H1 (cell line): ENCODE measurements at regions of chr1 and their contacts with region 1.

Region 1: GRCh38 chr1:155911156-155912055 is at the start of gene RIT1:
- DNase-seq: peak; percentile 62 to 89
- H3K4me3 ChIP-seq: peak within 1 kb of the TSS; percentile 68 to 87 (median 74)
- H3K27ac ChIP-seq: peak within 1 kb of the TSS; percentile 59; the same call in 1 of the 2 replicates
- H3K4me1 ChIP-seq: peaks cover 0 to 3% (median 1%) of the 10 kb centered on the region in 4 experiments; a peak in 2 of 7 replicates
- H3K27me3 ChIP-seq: no peaks in the 10 kb centered on the region
- CTCF ChIP-seq: no peak; a peak in 1 of 4 replicates
- EP300 ChIP-seq: no peak
- POLR2A ChIP-seq: peak in 1 of 2 experiments; percentile 79; a peak in 2 of 3 replicates
- RAD21 ChIP-seq: no peak
- total RNA-seq, gene RIT1: 25.3 TPM in 2 replicates

Region 2: GRCh38 chr1:155929057-155929456 is 17.7 kb after region 1 on chr1:
- CTCF ChIA-PET with region 1: no interaction called
- POLR2A ChIA-PET with region 1: interaction called, 109 read pairs
- DNase-seq: no peak
- H3K4me3 ChIP-seq: no peak overlapping the region
- H3K27ac ChIP-seq: no peak overlapping the region
- H3K4me1 ChIP-seq: peaks cover 0 to 2% (median 1%) of the 10 kb centered on the region in 4 experiments; a peak in 4 of 7 replicates
- H3K27me3 ChIP-seq: no peaks in the 10 kb centered on the region
- CTCF ChIP-seq: no peak
- EP300 ChIP-seq: no peak
- POLR2A ChIP-seq: no peak
- RAD21 ChIP-seq: no peak

Region 3: GRCh38 chr1:155934097-155934935 is 22.9 kb after region 1 on chr1 and contains the start of gene KHDC4:
- CTCF ChIA-PET with region 1: interaction called, 3 read pairs
- POLR2A ChIA-PET with region 1: interaction called, 109 read pairs
- DNase-seq: peak; percentile 87 to 96
- H3K4me3 ChIP-seq: peak within 1 kb of the TSS; percentile 89 to 100 (median 94)
- H3K27ac ChIP-seq: peak within 1 kb of the TSS; percentile 88
- H3K4me1 ChIP-seq: peaks cover 0 to 2% (median 1%) of the 10 kb centered on the region in 4 experiments; a peak in 4 of 7 replicates
- H3K27me3 ChIP-seq: no peaks in the 10 kb centered on the region
- CTCF ChIP-seq: no peak
- EP300 ChIP-seq: no peak
- POLR2A ChIP-seq: peak; percentile 91 to 96
- RAD21 ChIP-seq: peak in 1 of 2 experiments; percentile 10; a peak in 2 of 4 replicates
- total RNA-seq, gene KHDC4: 53.4 and 56.6 TPM in 2 replicates